PC-3 (cell line): ENCODE measurements at regions of chr1 and their contacts with region 1.

Region 1: DNA sequence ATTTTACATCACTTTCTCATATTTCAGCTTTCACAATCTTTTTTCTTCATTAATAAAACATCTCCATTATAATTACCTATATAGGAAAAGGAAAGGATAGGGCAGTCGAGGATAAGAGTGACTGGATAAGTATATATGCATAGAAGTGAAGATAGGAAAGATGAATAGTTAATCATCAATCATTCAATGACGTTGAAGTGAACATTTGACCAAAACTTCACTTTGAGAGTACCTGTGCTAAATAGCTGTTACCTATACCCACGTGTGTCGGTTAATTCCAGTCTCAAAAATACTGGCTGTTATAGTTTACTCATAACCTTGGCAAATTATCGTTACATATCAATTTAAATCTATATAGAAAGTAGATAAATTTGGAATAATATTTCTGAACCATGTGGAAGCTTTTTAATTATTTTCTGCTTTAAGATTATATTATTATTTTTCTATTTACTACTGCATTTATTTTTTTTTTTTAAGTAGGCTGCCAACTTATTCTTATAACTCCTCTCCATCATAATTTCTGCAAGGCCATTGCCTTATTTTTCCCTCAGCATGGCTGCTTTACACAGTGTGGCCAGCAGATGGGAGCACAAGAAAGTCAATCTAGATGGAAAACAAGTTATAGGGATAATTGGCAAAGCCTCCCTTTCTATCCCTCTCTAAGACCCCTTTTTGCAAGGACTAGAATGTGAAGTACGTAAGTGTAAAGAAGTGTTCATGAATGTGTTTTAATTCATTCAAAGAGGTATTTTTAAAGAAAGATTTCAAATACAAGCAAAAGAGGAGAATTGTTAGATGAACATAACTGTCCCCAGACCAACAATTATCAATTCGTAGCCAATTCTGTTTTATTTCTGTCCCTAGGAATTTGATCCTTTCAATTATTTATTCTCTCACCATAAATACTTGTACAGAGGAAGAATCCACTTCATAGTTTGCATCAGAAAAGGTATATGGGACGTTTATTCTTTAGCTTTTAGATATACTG is 290.4 kb downstream of the KCNT2 start:
- DNase-seq: peak; percentile 49
- ATAC-seq: no peak
- H3K4me3 ChIP-seq: no peak overlapping the region
- H3K27ac ChIP-seq: no peak overlapping the region
- H3K4me1 ChIP-seq: no peaks in the 10 kb centered on the region
- H3K27me3 ChIP-seq: no peaks in the 10 kb centered on the region
- CTCF ChIP-seq: peak; percentile 64

Region 2: GRCh38 chr1:196355206-196355786 is 37.5 kb after region 1 on chr1:
- CTCF ChIA-PET with region 1: no interaction called
- POLR2A ChIA-PET with region 1: no interaction called
- intact Hi-C with region 1: loop called (anchors 5 kb)
- DNase-seq: peak; percentile 33
- ATAC-seq: no peak
- H3K4me3 ChIP-seq: no peak overlapping the region
- H3K27ac ChIP-seq: no peak overlapping the region
- H3K4me1 ChIP-seq: peaks cover 2% of the 10 kb centered on the region
- H3K27me3 ChIP-seq: no peaks in the 10 kb centered on the region
- CTCF ChIP-seq: peak; percentile 63

Region 3: GRCh38 chr1:196393742-196394141 is 75.9 kb after region 1 on chr1:
- CTCF ChIA-PET with region 1: no interaction called
- POLR2A ChIA-PET with region 1: no interaction called
- intact Hi-C with region 1: no loop called
- DNase-seq: peak; percentile 60
- ATAC-seq: no peak; the same call in 1 of the 2 replicates
- H3K4me3 ChIP-seq: no peak overlapping the region
- H3K27ac ChIP-seq: no peak overlapping the region
- H3K4me1 ChIP-seq: no peaks in the 10 kb centered on the region
- H3K27me3 ChIP-seq: no peaks in the 10 kb centered on the region
- CTCF ChIP-seq: no peak

Region 4: GRCh38 chr1:196577386-196577785 is 259.6 kb after region 1 on chr1:
- CTCF ChIA-PET with region 1: no interaction called
- POLR2A ChIA-PET with region 1: no interaction called
- intact Hi-C with region 1: no loop called
- DNase-seq: no peak
- ATAC-seq: no peak
- H3K4me3 ChIP-seq: no peak overlapping the region
- H3K27ac ChIP-seq: no peak overlapping the region
- H3K4me1 ChIP-seq: no peaks in the 10 kb centered on the region
- H3K27me3 ChIP-seq: no peaks in the 10 kb centered on the region
- CTCF ChIP-seq: no peak